ENCODE measurements at regions of chr17 and their contacts with region 1.

Region 1: GRCh38 chr17:63419949-63420867 is 25.9 kb downstream of the CYB561 start:
- DNase-seq: peak; percentile 67
- ATAC-seq: peak; percentile 68
- H3K4me3 Mint-ChIP-seq: no peak overlapping the region
- H3K27ac Mint-ChIP-seq: peak overlapping the region; percentile 75
- H3K4me1 Mint-ChIP-seq: peaks cover 12% of the 10 kb centered on the region
- H3K27me3 Mint-ChIP-seq: no peaks in the 10 kb centered on the region

Region 2: DNA sequence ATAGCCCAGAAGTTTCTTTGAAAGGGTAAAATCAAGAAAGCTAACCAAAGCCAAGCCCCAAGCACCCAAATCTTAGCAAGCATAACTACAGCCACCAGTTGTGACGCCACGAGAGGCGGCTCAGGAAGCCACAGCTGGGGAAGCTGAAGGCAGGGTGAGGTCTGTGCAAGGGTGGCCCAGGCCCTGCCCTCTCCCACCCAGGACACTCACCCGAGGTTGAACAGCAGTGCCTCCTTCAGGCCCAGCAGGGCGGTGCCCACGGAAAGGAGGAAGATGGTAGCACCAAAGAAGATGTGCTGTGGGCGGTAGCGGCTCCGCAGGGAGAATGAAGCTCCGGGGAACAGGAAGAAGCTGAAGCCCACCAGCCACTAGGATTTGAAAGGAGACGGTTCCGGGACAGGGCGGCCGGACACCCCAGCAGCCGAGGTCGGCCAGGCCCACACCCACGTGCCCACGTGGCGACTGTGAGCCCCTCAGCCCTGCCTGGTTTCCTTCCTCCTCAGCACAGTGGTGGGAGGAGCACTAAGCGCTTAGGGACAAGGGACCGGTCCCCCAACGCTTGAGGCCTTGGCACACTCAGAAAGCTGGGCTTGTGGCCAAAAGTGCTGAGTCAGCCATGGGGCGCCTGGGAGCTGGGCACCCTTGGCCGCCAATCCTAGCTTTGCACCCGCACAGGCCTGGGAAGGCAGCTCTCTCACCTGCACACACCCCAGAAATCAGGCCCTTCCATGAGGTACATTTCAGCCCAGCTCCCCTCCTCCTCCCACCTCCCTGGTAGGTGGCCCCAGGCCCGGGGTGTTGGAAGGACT is 14.9 kb after region 1 on chr17:
- CTCF ChIA-PET with region 1: interaction called, 18 read pairs
- POLR2A ChIA-PET with region 1: no interaction called
- intact Hi-C with region 1: loop called in 1 of 2 experiments (anchors 2 kb)
- DNase-seq: peak; percentile 46
- ATAC-seq: no peak
- H3K4me3 Mint-ChIP-seq: no peak overlapping the region
- H3K27ac Mint-ChIP-seq: peak overlapping the region; percentile 12
- H3K4me1 Mint-ChIP-seq: peaks cover 16% of the 10 kb centered on the region
- H3K27me3 Mint-ChIP-seq: no peaks in the 10 kb centered on the region

Region 3: GRCh38 chr17:63455417-63455816 is 35.2 kb after region 1 on chr17:
- CTCF ChIA-PET with region 1: no interaction called
- POLR2A ChIA-PET with region 1: no interaction called
- intact Hi-C with region 1: no loop called
- DNase-seq: no peak
- ATAC-seq: no peak
- H3K4me3 Mint-ChIP-seq: no peak overlapping the region
- H3K27ac Mint-ChIP-seq: no peak overlapping the region
- H3K4me1 Mint-ChIP-seq: peaks cover 3% of the 10 kb centered on the region
- H3K27me3 Mint-ChIP-seq: peaks cover 2% of the 10 kb centered on the region

Measured in activated CD4-positive, alpha-beta T cell treated with anti-CD3 and anti-CD28 coated beads for 36 hours (primary cell).